SK-N-SH (cell line): ENCODE measurements at regions of chr15 and their contacts with region 1.

Region 1: DNA sequence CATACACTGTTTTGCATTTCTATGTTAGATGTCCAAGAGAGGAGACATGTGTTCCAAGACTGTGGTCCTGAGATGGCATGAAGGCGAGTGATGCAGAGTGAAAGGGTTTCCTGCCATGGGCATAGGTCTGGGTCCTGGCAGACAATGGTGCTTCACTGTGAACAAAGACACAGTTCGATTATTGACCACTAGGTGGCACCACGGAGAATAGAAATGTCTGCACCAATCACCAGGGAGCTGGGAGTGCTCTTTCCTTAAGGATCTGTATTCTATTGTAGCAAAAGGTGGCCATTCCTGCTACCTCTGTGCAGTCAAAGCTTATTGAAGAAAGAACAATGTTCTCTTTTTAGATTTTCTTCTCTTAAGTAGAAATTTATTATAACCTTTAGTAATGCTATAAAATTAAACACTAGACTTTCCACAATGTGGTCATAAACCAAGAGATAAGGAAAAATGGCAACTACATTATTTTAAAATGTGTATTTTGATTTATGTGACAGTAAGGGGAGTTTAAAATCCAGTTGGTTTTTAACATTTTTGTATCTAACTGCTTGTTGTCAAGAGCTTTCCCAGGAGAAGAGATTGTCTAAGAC is 88.7 kb downstream of the GABRG3 start:
- DNase-seq: peak; percentile 79
- H3K4me3 ChIP-seq: no peak overlapping the region; a peak in 1 of 4 replicates
- H3K27ac ChIP-seq: no peak overlapping the region
- H3K4me1 ChIP-seq: peaks cover 0 to 3% of the 10 kb centered on the region in 2 experiments; a peak in 1 of 4 replicates
- H3K27me3 ChIP-seq: no peaks in the 10 kb centered on the region
- CTCF ChIP-seq: peak; percentile 60
- EP300 ChIP-seq: no peak
- RAD21 ChIP-seq: peak; percentile 76

Region 2: DNA sequence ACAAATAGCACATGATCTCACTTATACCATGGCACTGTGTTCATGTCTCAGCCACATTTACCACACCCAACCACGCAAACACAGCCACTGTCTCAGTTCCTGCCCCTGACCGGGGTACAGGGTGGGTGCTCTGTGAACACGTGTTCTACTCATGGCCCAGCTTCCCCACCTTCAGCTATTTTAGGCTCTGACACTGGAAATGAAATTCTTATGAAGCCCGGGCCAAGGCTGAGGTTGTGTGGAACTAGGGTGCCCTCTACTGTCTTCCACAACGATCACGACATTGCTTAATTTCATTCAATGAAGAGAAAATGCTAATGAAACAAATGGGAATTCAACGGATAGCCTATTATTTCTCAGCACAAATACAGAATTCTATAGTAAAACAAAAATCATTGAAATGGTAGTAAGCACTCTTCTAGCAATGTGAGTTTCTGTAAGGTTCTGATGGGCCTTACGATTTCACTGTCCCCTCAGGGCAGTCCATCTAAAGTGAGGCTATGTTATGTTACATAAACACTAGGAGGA is 195.0 kb before region 1 on chr15:
- CTCF ChIA-PET with region 1: no interaction called
- POLR2A ChIA-PET with region 1: no interaction called
- DNase-seq: peak; percentile 77
- H3K4me3 ChIP-seq: no peak overlapping the region; a peak in 1 of 4 replicates
- H3K27ac ChIP-seq: no peak overlapping the region
- H3K4me1 ChIP-seq: no peaks in the 10 kb centered on the region; a peak in 1 of 4 replicates
- H3K27me3 ChIP-seq: no peaks in the 10 kb centered on the region
- CTCF ChIP-seq: peak; percentile 60
- EP300 ChIP-seq: no peak
- RAD21 ChIP-seq: peak; percentile 92

Region 3: GRCh38 chr15:27046880-27047279 is 12.8 kb before region 1 on chr15:
- CTCF ChIA-PET with region 1: interaction called, 65 read pairs
- POLR2A ChIA-PET with region 1: no interaction called
- DNase-seq: no peak
- H3K4me3 ChIP-seq: no peak overlapping the region
- H3K27ac ChIP-seq: no peak overlapping the region
- H3K4me1 ChIP-seq: peaks cover 0 to 7% of the 10 kb centered on the region in 2 experiments; a peak in 1 of 4 replicates
- H3K27me3 ChIP-seq: no peaks in the 10 kb centered on the region
- CTCF ChIP-seq: no peak
- EP300 ChIP-seq: no peak
- RAD21 ChIP-seq: no peak

Region 4: GRCh38 chr15:27070841-27071240 is 11.1 kb after region 1 on chr15:
- CTCF ChIA-PET with region 1: interaction called, 19 read pairs
- POLR2A ChIA-PET with region 1: no interaction called
- DNase-seq: no peak
- H3K4me3 ChIP-seq: no peak overlapping the region
- H3K27ac ChIP-seq: no peak overlapping the region
- H3K4me1 ChIP-seq: no peaks in the 10 kb centered on the region
- H3K27me3 ChIP-seq: no peaks in the 10 kb centered on the region
- CTCF ChIP-seq: no peak
- EP300 ChIP-seq: no peak
- RAD21 ChIP-seq: no peak

Region 5: DNA sequence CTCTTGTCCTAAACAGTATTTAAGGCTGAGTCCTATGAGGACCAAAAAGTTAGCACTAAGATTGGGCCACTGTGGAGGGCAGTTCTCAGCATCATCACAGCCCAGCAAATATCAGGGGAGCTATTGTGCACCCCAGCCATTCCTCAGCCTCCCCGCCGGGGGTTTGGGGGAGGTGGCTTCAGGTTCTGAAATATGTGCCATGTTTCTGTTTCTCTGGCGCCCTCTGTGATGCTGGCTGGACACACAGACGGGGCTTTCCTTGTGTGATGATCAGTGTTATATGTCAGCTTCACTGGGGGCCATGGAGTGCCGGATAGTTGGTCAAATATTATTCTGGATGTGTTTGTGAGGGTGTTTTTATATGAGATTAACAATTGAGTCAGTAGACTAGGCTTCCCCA is 18.1 kb after region 1 on chr15:
- CTCF ChIA-PET with region 1: interaction called, 19 read pairs
- POLR2A ChIA-PET with region 1: no interaction called
- DNase-seq: peak; percentile 47
- H3K4me3 ChIP-seq: no peak overlapping the region
- H3K27ac ChIP-seq: no peak overlapping the region
- H3K4me1 ChIP-seq: peaks cover 0 to 5% of the 10 kb centered on the region in 2 experiments; a peak in 1 of 4 replicates
- H3K27me3 ChIP-seq: no peaks in the 10 kb centered on the region
- CTCF ChIP-seq: no peak
- EP300 ChIP-seq: no peak
- RAD21 ChIP-seq: peak; percentile 47

Region 6: DNA sequence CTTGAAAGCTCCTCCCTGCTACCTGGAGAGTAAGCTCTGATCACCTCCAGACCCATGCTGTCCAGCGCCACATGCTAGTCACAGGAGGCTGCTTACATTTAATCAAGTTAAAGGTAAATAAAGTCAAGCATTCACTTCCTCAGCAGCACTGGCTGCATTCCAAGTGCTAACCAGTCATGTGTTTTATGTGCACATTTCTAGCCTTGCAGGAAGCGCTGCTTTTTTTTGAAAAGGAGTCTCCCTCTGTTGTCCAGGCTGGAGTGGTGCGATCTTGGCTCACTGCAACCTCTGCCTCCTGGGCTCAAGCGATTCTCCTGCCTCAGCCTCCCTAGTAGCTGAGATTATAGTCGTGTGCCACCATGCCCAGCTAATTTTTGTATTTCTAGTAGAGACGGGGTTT is 190.5 kb after region 1 on chr15:
- CTCF ChIA-PET with region 1: interaction called, 18 read pairs
- POLR2A ChIA-PET with region 1: no interaction called
- DNase-seq: no peak
- H3K4me3 ChIP-seq: no peak overlapping the region
- H3K27ac ChIP-seq: peak overlapping the region in 1 of 2 experiments; percentile 25; a peak in 1 of 4 replicates
- H3K4me1 ChIP-seq: peaks cover 0 to 22% of the 10 kb centered on the region in 2 experiments; a peak in 1 of 4 replicates
- H3K27me3 ChIP-seq: no peaks in the 10 kb centered on the region
- CTCF ChIP-seq: no peak
- EP300 ChIP-seq: no peak
- RAD21 ChIP-seq: peak; percentile 48

Region 7: GRCh38 chr15:27358751-27359434 is 299.2 kb after region 1 on chr15:
- CTCF ChIA-PET with region 1: interaction called, 44 read pairs
- POLR2A ChIA-PET with region 1: no interaction called
- DNase-seq: peak; percentile 41
- H3K4me3 ChIP-seq: no peak overlapping the region; a peak in 1 of 4 replicates
- H3K27ac ChIP-seq: no peak overlapping the region
- H3K4me1 ChIP-seq: no peaks in the 10 kb centered on the region; a peak in 1 of 4 replicates
- H3K27me3 ChIP-seq: no peaks in the 10 kb centered on the region
- CTCF ChIP-seq: peak; percentile 29
- EP300 ChIP-seq: no peak
- RAD21 ChIP-seq: peak; percentile 67